ENCODE measurements at regions of chr22 and their contacts with region 1.

Region 1: GRCh38 chr22:36331306-36331911 is 56.4 kb downstream of the MYH9 start:
- DNase-seq: peak; percentile 53 to 93 (median 76)
- ATAC-seq: peak; percentile 50
- H3K4me3 ChIP-seq: peak overlapping the region; percentile 44
- H3K4me3 Mint-ChIP-seq: peak overlapping the region; percentile 90
- H3K27ac ChIP-seq: peak overlapping the region; percentile 87 to 92
- H3K27ac Mint-ChIP-seq: peak overlapping the region; percentile 93
- H3K4me1 ChIP-seq: peaks cover 97% of the 10 kb centered on the region
- H3K4me1 Mint-ChIP-seq: peaks cover 100% of the 10 kb centered on the region
- H3K27me3 ChIP-seq: no peaks in the 10 kb centered on the region
- H3K27me3 Mint-ChIP-seq: no peaks in the 10 kb centered on the region
- CTCF ChIP-seq: no peak

Region 2: GRCh38 chr22:35863432-35863831 is 468.0 kb before region 1 on chr22:
- CTCF ChIA-PET with region 1: no interaction called
- POLR2A ChIA-PET with region 1: no interaction called
- intact Hi-C with region 1: no loop called
- DNase-seq: no peak
- ATAC-seq: no peak
- H3K4me3 ChIP-seq: no peak overlapping the region
- H3K4me3 Mint-ChIP-seq: no peak overlapping the region
- H3K27ac ChIP-seq: no peak overlapping the region
- H3K27ac Mint-ChIP-seq: no peak overlapping the region
- H3K4me1 ChIP-seq: no peaks in the 10 kb centered on the region
- H3K4me1 Mint-ChIP-seq: no peaks in the 10 kb centered on the region
- H3K27me3 ChIP-seq: no peaks in the 10 kb centered on the region
- H3K27me3 Mint-ChIP-seq: no peaks in the 10 kb centered on the region
- CTCF ChIP-seq: no peak

Region 3: DNA sequence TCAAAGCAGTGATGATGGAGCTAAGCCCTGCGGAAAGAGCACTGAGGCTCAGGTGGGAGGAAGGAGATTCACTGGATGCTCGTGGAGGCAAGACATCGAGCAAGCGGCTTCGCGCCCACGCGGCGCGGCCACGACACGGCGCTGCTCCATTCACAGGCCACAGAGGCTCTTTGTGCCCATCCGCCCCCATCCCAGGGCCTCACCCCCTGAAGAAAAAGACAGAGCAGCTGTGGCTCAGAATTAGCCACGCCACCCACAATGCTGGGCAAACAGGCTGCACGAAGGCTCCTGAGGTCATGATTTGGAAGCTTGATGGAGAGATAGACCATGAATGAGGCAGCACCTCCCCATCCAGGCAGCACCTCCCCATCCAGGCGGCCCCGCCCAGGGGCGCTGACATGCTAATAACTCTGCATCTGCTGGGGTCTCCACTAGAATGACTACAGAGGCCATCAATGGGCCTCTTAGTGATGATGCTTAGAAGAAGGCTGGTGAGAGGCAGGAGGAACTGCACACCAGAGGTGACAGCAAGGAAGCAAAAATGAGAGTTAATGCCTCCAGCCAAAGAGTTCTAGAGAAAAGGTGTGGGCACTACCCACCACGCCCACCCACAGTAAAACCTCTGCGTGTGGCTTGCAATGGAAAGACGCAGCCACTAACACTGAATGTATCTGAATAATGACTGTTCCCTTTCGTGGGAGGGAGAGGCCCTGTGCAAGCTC is 12.9 kb after region 1 on chr22:
- CTCF ChIA-PET with region 1: interaction called, 3 read pairs
- POLR2A ChIA-PET with region 1: interaction called, 1,847 read pairs
- intact Hi-C with region 1: no loop called
- DNase-seq: peak in 3 of 14 experiments; percentile 36 to 55 (median 51)
- ATAC-seq: peak; percentile 24
- H3K4me3 ChIP-seq: no peak overlapping the region
- H3K4me3 Mint-ChIP-seq: peak overlapping the region; percentile 72
- H3K27ac ChIP-seq: peak overlapping the region; percentile 42 to 54
- H3K27ac Mint-ChIP-seq: peak overlapping the region; percentile 93
- H3K4me1 ChIP-seq: peaks cover 97% of the 10 kb centered on the region
- H3K4me1 Mint-ChIP-seq: peaks cover 88% of the 10 kb centered on the region
- H3K27me3 ChIP-seq: no peaks in the 10 kb centered on the region
- H3K27me3 Mint-ChIP-seq: no peaks in the 10 kb centered on the region
- CTCF ChIP-seq: no peak

Region 4: DNA sequence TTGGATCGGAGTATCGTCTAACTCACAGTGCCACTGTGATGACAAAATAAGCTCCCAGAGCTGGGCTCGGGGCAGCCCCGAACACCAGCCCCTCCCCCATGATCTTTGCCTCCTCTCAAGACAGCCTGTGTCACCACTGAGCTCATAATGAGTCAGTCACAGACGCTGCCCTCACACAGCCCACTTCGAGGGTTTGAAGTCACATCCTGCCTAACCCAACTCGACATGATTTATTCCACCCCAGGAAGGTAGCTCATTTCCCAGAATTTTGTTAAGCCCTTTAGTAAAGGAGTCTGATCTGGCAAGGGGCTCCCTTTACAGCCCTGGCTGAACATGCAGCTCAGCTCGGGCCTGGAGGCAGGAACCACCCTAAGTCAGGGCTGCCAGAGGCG is 33.6 kb after region 1 on chr22:
- CTCF ChIA-PET with region 1: interaction called, 9 read pairs
- POLR2A ChIA-PET with region 1: interaction called, 1,847 read pairs
- intact Hi-C with region 1: loop called in 1 of 2 experiments (anchors 5 kb)
- DNase-seq: peak; percentile 73 to 96 (median 84)
- ATAC-seq: peak; percentile 90
- H3K4me3 ChIP-seq: no peak overlapping the region
- H3K4me3 Mint-ChIP-seq: peak overlapping the region; percentile 81
- H3K27ac ChIP-seq: peak overlapping the region; percentile 84 to 91
- H3K27ac Mint-ChIP-seq: peak overlapping the region; percentile 93
- H3K4me1 ChIP-seq: peaks cover 99% of the 10 kb centered on the region
- H3K4me1 Mint-ChIP-seq: peaks cover 96% of the 10 kb centered on the region
- H3K27me3 ChIP-seq: no peaks in the 10 kb centered on the region
- H3K27me3 Mint-ChIP-seq: no peaks in the 10 kb centered on the region
- CTCF ChIP-seq: no peak

Region 5: GRCh38 chr22:36379593-36380361 is 48.4 kb after region 1 on chr22:
- CTCF ChIA-PET with region 1: interaction called, 6 read pairs
- POLR2A ChIA-PET with region 1: interaction called, 1,847 read pairs
- intact Hi-C with region 1: loop called (anchors 2 to 5 kb)
- DNase-seq: peak in 12 of 14 experiments; percentile 38 to 89 (median 63)
- ATAC-seq: peak; percentile 37
- H3K4me3 ChIP-seq: peak overlapping the region; percentile 31
- H3K4me3 Mint-ChIP-seq: peak overlapping the region; percentile 70
- H3K27ac ChIP-seq: peak overlapping the region; percentile 85 to 95
- H3K27ac Mint-ChIP-seq: peak overlapping the region; percentile 93
- H3K4me1 ChIP-seq: peaks cover 98% of the 10 kb centered on the region
- H3K4me1 Mint-ChIP-seq: peaks cover 85% of the 10 kb centered on the region
- H3K27me3 ChIP-seq: no peaks in the 10 kb centered on the region
- H3K27me3 Mint-ChIP-seq: no peaks in the 10 kb centered on the region
- CTCF ChIP-seq: no peak

Region 6: DNA sequence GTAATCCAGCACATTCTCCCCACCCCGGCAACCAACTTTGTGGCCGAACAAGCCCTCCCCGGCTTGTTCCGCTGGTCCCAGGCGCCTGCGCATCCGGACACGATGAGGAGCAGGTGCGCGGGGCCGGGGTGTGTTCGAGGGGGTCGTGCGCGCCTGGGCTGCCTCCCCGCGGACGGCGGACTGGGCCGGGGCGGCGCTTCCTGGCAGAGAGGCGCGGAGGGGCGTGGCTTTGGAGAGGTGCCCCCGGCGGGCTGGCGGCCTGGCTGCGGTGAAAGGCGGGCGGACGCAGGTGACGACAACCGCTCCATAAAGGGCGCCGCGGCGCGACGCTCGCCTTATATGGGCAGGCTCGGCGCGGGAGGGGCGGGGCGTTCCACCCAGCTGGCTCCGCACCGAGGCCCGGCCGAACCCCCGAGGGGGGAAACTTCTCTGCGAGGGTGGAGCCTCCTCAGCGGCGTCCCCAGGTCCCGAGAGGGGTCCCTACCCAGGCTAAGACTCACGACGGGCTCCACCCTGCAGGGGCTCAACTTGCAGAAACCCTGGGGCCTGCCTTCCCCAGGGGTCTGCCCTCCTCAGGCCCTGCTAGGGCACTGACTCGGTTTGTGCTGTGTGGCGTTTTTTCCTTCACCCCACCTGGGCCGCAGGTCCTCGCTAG is 123.6 kb after region 1 on chr22:
- CTCF ChIA-PET with region 1: interaction called, 3 read pairs
- POLR2A ChIA-PET with region 1: interaction called, 11 read pairs
- intact Hi-C with region 1: loop called (anchors 1 to 5 kb)
- DNase-seq: peak; percentile 86 to 98 (median 96)
- ATAC-seq: peak; percentile 70
- H3K4me3 ChIP-seq: peak overlapping the region; percentile 76
- H3K4me3 Mint-ChIP-seq: peak overlapping the region; percentile 84
- H3K27ac ChIP-seq: peak overlapping the region; percentile 89 to 92
- H3K27ac Mint-ChIP-seq: peak overlapping the region; percentile 93
- H3K4me1 ChIP-seq: peaks cover 61% of the 10 kb centered on the region
- H3K4me1 Mint-ChIP-seq: peaks cover 46% of the 10 kb centered on the region
- H3K27me3 ChIP-seq: no peaks in the 10 kb centered on the region
- H3K27me3 Mint-ChIP-seq: no peaks in the 10 kb centered on the region
- CTCF ChIP-seq: no peak

Region 7: GRCh38 chr22:36481393-36482168 is 150.2 kb after region 1 on chr22 and contains the start of gene TXN2:
- CTCF ChIA-PET with region 1: interaction called, 7 read pairs
- POLR2A ChIA-PET with region 1: interaction called, 15 read pairs
- intact Hi-C with region 1: no loop called
- DNase-seq: peak; percentile 92 to 98 (median 96)
- ATAC-seq: peak; percentile 87
- H3K4me3 ChIP-seq: peak within 1 kb of the TSS; percentile 67
- H3K4me3 Mint-ChIP-seq: peak within 1 kb of the TSS; percentile 95
- H3K27ac ChIP-seq: peak within 1 kb of the TSS; percentile 94 to 99
- H3K27ac Mint-ChIP-seq: peak within 1 kb of the TSS; percentile 92
- H3K4me1 ChIP-seq: peaks cover 22% of the 10 kb centered on the region
- H3K4me1 Mint-ChIP-seq: peaks cover 22% of the 10 kb centered on the region
- H3K27me3 ChIP-seq: no peaks in the 10 kb centered on the region
- H3K27me3 Mint-ChIP-seq: no peaks in the 10 kb centered on the region
- CTCF ChIP-seq: no peak
- total RNA-seq, gene TXN2: 26.4 to 26.5 TPM